ENCODE measurements at regions of chr12 and their contacts with region 1.

Region 1: GRCh38 chr12:12983420-12984035 is 16.5 kb downstream of the HEBP1 start:
- DNase-seq: peak; percentile 33
- ATAC-seq: peak; percentile 81
- H3K4me3 ChIP-seq: no peak overlapping the region
- H3K27ac ChIP-seq: no peak overlapping the region
- H3K4me1 ChIP-seq: no peaks in the 10 kb centered on the region
- H3K27me3 ChIP-seq: no peaks in the 10 kb centered on the region
- CTCF ChIP-seq: peak; percentile 59 to 79 (median 69); a peak in 5 of 6 replicates
- POLR2A ChIP-seq: no peak
- RAD21 ChIP-seq: peak; percentile 85

Region 2: GRCh38 chr12:12786716-12787601 is 196.6 kb before region 1 on chr12:
- CTCF ChIA-PET with region 1: interaction called, 5 read pairs
- POLR2A ChIA-PET with region 1: no interaction called
- RAD21 ChIA-PET with region 1: no interaction called
- intact Hi-C with region 1: loop called (anchors 1 kb)
- DNase-seq: no peak
- ATAC-seq: peak; percentile 83
- H3K4me3 ChIP-seq: peak overlapping the region; percentile 20 to 47
- H3K27ac ChIP-seq: peak overlapping the region; percentile 21; the same call in 1 of the 2 replicates
- H3K4me1 ChIP-seq: peaks cover 6 to 47% of the 10 kb centered on the region in 2 experiments; a peak in 3 of 4 replicates
- H3K27me3 ChIP-seq: no peaks in the 10 kb centered on the region
- CTCF ChIP-seq: no peak
- POLR2A ChIP-seq: no peak
- RAD21 ChIP-seq: no peak

Region 3: DNA sequence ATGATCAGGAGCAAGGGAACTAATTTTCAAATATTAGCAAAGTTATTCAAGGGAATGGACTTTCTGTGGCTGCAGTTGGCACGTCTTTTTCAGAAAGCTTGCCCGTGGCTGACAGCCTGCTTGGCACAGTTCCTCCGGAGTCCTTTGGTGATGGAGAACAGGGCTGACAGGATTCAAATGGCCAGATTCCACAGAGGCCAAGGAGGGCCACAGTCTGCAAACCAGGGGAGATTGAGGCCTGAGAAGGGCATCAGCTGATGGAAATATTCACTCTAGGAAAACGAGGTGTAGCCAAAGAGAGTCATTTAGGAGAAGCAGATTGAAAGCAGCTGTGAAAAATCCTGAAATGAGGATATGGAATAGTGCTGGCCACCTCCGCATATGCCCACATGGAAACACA is 391.3 kb after region 1 on chr12:
- CTCF ChIA-PET with region 1: no interaction called
- POLR2A ChIA-PET with region 1: no interaction called
- RAD21 ChIA-PET with region 1: no interaction called
- intact Hi-C with region 1: no loop called
- DNase-seq: no peak
- ATAC-seq: no peak
- H3K4me3 ChIP-seq: no peak overlapping the region
- H3K27ac ChIP-seq: no peak overlapping the region
- H3K4me1 ChIP-seq: peaks cover 8 to 22% of the 10 kb centered on the region in 2 experiments
- H3K27me3 ChIP-seq: no peaks in the 10 kb centered on the region
- CTCF ChIP-seq: no peak
- POLR2A ChIP-seq: no peak
- RAD21 ChIP-seq: no peak